Aorta (tissue), 5 donors: ENCODE measurements at regions of chr2 and their contacts with region 1.

Region 1: GRCh38 chr2:118088051-118089024 is at the start of gene INSIG2:
- DNase-seq: peak; percentile 96 to 97
- ATAC-seq: peak; percentile 98
- H3K4me3 ChIP-seq: peak within 1 kb of the TSS; percentile 62 to 77
- H3K27ac ChIP-seq: peak within 1 kb of the TSS in 1 of 2 donors; percentile 8
- H3K4me1 ChIP-seq: peaks cover 0 to 4% of the 10 kb centered on the region in 2 donors
- H3K27me3 ChIP-seq: no peaks in the 10 kb centered on the region
- total RNA-seq, gene INSIG2: 34.2 to 43.2 TPM

Region 2: GRCh38 chr2:118186110-118186857 is 97.9 kb after region 1 on chr2:
- intact Hi-C with region 1: loop called (anchors 1 to 10 kb)
- DNase-seq: peak; percentile 95 to 97
- ATAC-seq: peak; percentile 96
- H3K4me3 ChIP-seq: peak overlapping the region; percentile 58
- H3K27ac ChIP-seq: peak overlapping the region; percentile 91 to 93
- H3K4me1 ChIP-seq: no peaks in the 10 kb centered on the region
- H3K27me3 ChIP-seq: no peaks in the 10 kb centered on the region